ENCODE measurements at regions of chr19 and their contacts with region 1.

Region 1: GRCh38 chr19:2820112-2820702 is 539 bp downstream of the ZNF554 start:
- DNase-seq: peak in 1 of 14 experiments; percentile 15
- ATAC-seq: peak; percentile 5
- H3K4me3 ChIP-seq: peak overlapping the region; percentile 69
- H3K4me3 Mint-ChIP-seq: peak overlapping the region; percentile 84
- H3K27ac ChIP-seq: no peak overlapping the region
- H3K27ac Mint-ChIP-seq: no peak overlapping the region
- H3K4me1 ChIP-seq: peaks cover 17% of the 10 kb centered on the region
- H3K4me1 Mint-ChIP-seq: peaks cover 8% of the 10 kb centered on the region
- H3K27me3 ChIP-seq: no peaks in the 10 kb centered on the region
- H3K27me3 Mint-ChIP-seq: no peaks in the 10 kb centered on the region
- CTCF ChIP-seq: no peak

Region 2: DNA sequence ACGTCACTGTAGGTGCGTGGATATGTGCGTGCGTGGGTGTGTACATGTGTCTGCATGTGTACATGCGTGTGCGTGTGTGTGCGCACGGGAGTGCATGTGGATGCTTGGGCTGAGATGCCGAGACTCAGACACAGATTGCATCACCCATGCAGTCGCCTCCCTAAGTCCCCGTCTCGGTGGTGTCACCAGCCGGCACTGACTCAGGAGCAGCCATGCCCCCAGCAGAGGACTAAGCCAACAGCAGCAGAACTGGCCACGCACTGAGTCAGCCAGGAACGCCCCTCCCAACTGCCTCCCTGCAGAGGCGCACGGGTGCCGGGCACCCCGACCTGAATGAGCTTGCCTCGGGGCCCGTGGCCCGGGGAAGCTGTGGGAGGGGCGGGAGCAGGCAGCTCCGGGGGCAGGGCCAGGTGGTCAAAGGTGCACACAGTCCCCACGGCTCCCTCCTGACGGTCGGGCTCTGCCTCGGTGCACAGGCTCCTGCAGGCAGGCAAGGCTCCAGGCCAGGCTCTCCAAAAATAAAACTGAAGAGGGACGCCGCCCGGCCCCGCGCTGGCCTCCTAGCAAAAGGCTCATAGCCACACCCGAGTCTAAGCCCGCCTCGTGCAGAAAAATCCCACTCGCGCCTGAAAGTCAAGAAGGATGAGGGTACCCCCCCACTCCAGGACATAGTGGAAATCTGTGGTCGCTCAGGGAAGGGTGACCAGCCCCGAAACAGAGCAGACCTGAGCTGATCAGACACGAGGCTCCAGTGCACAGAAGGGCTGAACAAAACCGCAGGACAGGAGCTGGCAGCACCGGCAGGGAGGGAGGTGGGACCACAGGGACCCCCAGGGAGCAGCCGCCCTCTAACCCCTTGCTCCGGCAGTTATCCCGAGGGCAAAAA is 295.1 kb before region 1 on chr19:
- CTCF ChIA-PET with region 1: no interaction called
- POLR2A ChIA-PET with region 1: no interaction called
- intact Hi-C with region 1: no loop called
- DNase-seq: no peak
- ATAC-seq: no peak
- H3K4me3 ChIP-seq: no peak overlapping the region
- H3K4me3 Mint-ChIP-seq: no peak overlapping the region
- H3K27ac ChIP-seq: no peak overlapping the region
- H3K27ac Mint-ChIP-seq: no peak overlapping the region
- H3K4me1 ChIP-seq: no peaks in the 10 kb centered on the region
- H3K4me1 Mint-ChIP-seq: no peaks in the 10 kb centered on the region
- H3K27me3 ChIP-seq: no peaks in the 10 kb centered on the region
- H3K27me3 Mint-ChIP-seq: no peaks in the 10 kb centered on the region
- CTCF ChIP-seq: no peak

Region 3: GRCh38 chr19:2782936-2783780 is 37.0 kb before region 1 on chr19 and contains the start of gene SGTA:
- CTCF ChIA-PET with region 1: interaction called, 6 read pairs
- POLR2A ChIA-PET with region 1: interaction called, 3 read pairs
- intact Hi-C with region 1: loop called (anchors 1 to 2 kb)
- DNase-seq: peak; percentile 91 to 99 (median 95)
- ATAC-seq: peak; percentile 60
- H3K4me3 ChIP-seq: peak within 1 kb of the TSS; percentile 100
- H3K4me3 Mint-ChIP-seq: peak within 1 kb of the TSS; percentile 94
- H3K27ac ChIP-seq: peak within 1 kb of the TSS; percentile 79 to 90
- H3K27ac Mint-ChIP-seq: peak within 1 kb of the TSS; percentile 91
- H3K4me1 ChIP-seq: peaks cover 62% of the 10 kb centered on the region
- H3K4me1 Mint-ChIP-seq: peaks cover 54% of the 10 kb centered on the region
- H3K27me3 ChIP-seq: no peaks in the 10 kb centered on the region
- H3K27me3 Mint-ChIP-seq: no peaks in the 10 kb centered on the region
- CTCF ChIP-seq: peak; percentile 45
- total RNA-seq, gene SGTA: 28.3 to 29.7 TPM

Measured in CD4-positive, alpha-beta T cell (primary cell).